ENCODE measurements at regions of chr2 and their contacts with region 1.

Region 1: DNA sequence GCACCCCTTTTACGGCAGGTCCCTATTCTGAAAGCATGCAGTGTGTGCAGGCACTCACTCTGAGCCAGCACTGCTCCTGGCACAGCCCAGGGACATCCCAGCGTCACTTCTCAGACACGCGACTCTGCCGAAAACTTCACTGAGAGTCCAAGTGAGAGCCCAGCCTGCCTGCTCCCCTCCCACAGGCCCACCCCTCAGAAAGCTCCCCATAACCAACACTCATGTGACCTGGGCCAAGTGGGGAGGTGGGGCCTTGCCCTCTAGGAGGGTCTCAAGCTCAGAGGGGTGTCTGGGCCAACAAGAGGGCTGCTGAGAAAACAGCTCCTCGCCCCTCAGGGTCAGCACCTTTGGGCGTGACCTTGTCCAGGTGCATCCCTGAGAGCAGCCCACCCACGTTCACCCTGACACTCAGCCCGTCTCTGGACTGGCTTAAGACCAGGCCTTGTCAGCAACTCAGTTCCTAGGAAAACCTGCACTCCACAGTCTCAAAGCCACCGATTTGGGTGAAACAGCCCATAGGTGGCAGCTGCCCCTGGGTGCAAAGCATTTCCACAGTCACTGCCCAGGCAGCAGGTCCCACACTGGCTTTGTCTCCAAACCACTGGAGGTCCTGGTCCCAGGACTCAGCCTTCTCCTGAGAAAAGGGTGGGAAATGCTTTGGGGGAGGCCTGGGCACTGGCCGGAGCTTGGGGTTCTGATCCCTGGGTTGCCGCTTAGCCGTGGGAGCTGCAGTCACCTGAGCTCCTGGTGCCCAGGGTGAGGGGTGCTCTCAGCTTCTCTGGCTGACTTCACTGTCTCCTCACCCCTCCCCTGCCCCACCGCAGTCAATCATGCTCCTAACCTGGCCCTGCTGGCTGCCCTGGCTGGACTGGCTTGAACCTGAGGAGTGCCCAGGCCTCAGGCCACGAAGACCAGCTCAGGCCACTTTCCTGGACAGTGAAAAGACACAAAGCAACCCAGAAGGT is 209.6 kb downstream of the HDAC4 start:
- DNase-seq: no peak
- ATAC-seq: no peak
- H3K4me3 ChIP-seq: no peak overlapping the region
- H3K27ac ChIP-seq: no peak overlapping the region
- H3K4me1 ChIP-seq: no peaks in the 10 kb centered on the region
- H3K27me3 ChIP-seq: no peaks in the 10 kb centered on the region
- CTCF ChIP-seq: no peak

Region 2: GRCh38 chr2:238421695-238422035 is 769.5 kb before region 1 on chr2:
- CTCF ChIA-PET with region 1: no interaction called
- POLR2A ChIA-PET with region 1: interaction called, 56 read pairs
- intact Hi-C with region 1: no loop called
- DNase-seq: no peak
- ATAC-seq: no peak
- H3K4me3 ChIP-seq: no peak overlapping the region
- H3K27ac ChIP-seq: no peak overlapping the region
- H3K4me1 ChIP-seq: peaks cover 4% of the 10 kb centered on the region; the same call in 1 of the 2 replicates
- H3K27me3 ChIP-seq: no peaks in the 10 kb centered on the region
- CTCF ChIP-seq: no peak

Measured in PC-3 (cell line).